Activated T-helper 2 cell treated with anti-CD3 and anti-CD28 coated beads, Interferon-gamma antibody, Interleukin-2, Interleukin-4, amounts not matched to agents 10 μg/mL and 5 μg/mL and 100 μg/mL, durations not matched to agents 14 hours and 24 hours and 36 hours (primary cell): ENCODE measurements at regions of chrX and their contacts with region 1.

Region 1: DNA sequence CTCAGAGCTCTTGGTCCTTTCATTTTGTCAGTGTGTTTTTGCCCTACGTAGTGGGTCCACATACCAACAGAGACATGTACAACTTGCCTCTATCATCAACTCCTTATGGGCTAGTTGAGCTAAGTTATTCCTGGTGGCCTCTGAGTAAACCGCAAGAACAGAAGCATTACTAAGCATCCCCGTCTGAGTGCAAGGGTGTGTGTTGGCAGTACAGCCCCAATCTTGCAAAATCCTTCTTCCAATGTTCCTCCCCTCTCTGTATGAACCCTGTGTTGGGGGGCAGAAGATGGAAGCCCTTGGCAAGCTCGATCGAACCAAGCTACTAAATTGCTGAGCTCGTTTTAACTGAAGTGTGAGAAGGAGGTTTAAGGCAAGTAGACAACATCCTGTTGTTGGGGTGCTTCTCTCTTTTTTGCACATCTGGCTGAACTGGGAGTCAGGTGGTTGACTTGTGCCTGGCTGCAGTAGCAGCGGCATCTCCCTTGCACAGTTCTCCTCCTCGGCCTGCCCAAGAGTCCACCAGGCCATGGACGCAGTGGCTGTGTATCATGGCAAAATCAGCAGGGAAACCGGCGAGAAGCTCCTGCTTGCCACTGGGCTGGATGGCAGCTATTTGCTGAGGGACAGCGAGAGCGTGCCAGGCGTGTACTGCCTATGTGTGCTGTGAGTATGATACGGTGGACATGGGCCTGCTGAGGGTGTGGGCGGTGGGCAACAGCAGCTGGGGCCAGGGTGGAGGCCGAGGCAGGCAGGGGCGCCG is at the start of gene SH2D1A:
- DNase-seq: peak; percentile 24
- H3K4me3 Mint-ChIP-seq: peak within 1 kb of the TSS; percentile 94
- H3K27ac Mint-ChIP-seq: peak within 1 kb of the TSS; percentile 99
- H3K4me1 Mint-ChIP-seq: peaks cover 45% of the 10 kb centered on the region
- H3K27me3 Mint-ChIP-seq: no peaks in the 10 kb centered on the region
- total RNA-seq, gene SH2D1A: 54.9 and 57.7 TPM in 2 replicates

Region 2: GRCh38 chrX:123859846-123860838 is 486.2 kb before region 1 on chrX and contains the start of gene XIAP:
- intact Hi-C with region 1: loop called (anchors 10 kb)
- DNase-seq: peak; percentile 63
- H3K4me3 Mint-ChIP-seq: peak within 1 kb of the TSS; percentile 84
- H3K27ac Mint-ChIP-seq: peak within 1 kb of the TSS; percentile 84
- H3K4me1 Mint-ChIP-seq: peaks cover 9% of the 10 kb centered on the region
- H3K27me3 Mint-ChIP-seq: no peaks in the 10 kb centered on the region
- total RNA-seq, gene XIAP: 32.7 and 33.4 TPM in 2 replicates

Region 3: DNA sequence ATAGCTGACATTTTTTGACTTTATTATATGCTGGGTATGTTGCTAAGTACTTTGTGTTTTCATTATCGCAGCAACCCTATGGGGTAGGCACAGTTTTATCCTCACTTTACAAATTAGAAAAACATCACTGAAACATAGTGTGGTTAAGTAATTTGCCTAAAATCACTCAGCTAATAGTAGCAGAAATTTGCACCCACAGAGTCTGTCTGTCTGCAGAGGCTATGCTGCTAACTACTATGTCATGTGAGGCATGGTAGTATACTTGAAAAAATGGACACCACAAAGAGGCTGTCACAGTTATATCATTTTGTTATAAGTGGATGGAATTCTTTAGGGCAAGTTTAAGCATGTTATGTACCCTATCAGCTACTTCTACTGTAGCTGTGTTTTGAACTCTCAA is 315.8 kb before region 1 on chrX:
- intact Hi-C with region 1: no loop called
- DNase-seq: no peak
- H3K4me3 Mint-ChIP-seq: no peak overlapping the region
- H3K27ac Mint-ChIP-seq: no peak overlapping the region
- H3K4me1 Mint-ChIP-seq: peaks cover 5% of the 10 kb centered on the region
- H3K27me3 Mint-ChIP-seq: no peaks in the 10 kb centered on the region

Region 4: DNA sequence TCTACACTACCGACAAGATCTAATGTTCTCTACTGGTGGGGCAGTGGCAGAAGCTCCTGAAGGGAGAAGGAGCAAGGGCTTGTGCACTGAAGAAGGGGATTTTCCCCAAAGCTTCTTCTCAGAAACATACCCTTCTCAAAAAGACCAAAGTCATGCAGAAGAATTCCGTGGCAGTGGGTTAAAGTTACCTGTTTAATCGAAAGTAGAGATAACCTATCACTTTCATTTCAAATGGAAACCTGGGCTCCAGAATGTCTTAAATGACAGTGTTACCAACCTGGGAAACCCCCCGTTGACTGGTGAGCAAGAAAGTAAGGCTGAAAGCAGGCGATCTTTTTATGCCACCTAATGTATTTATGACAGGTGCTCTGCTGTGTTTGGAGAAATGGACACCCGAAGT is 106.4 kb before region 1 on chrX:
- intact Hi-C with region 1: loop called (anchors 1 kb)
- DNase-seq: peak; percentile 38
- H3K4me3 Mint-ChIP-seq: peak overlapping the region; percentile 58
- H3K27ac Mint-ChIP-seq: peak overlapping the region; percentile 73
- H3K4me1 Mint-ChIP-seq: peaks cover 32% of the 10 kb centered on the region
- H3K27me3 Mint-ChIP-seq: no peaks in the 10 kb centered on the region

Region 5: GRCh38 chrX:124280294-124280902 is 65.9 kb before region 1 on chrX:
- intact Hi-C with region 1: loop called (anchors 5 kb)
- DNase-seq: no peak
- H3K4me3 Mint-ChIP-seq: no peak overlapping the region
- H3K27ac Mint-ChIP-seq: peak overlapping the region; percentile 87
- H3K4me1 Mint-ChIP-seq: peaks cover 19% of the 10 kb centered on the region
- H3K27me3 Mint-ChIP-seq: no peaks in the 10 kb centered on the region

Region 6: DNA sequence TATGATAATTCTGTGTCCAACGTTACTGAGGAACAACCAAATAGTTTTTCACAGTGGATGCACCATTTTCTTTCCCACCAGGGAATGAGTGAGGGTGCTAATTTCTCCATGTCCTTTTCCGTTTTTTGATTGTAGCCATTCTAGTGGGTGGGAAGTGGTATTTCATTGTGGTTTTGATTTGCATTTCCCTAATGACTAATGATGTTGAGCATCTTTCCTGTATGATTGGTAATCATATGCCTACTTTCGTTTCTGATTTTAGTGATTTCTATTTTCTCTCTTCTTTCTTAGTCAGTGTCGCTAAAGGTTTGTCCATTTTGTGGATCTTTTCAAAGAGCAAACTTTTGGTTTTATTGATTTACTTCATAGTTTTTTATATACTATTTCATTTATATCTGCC is 45.9 kb before region 1 on chrX:
- intact Hi-C with region 1: loop called (anchors 1 kb)
- DNase-seq: no peak
- H3K4me3 Mint-ChIP-seq: no peak overlapping the region
- H3K27ac Mint-ChIP-seq: peak overlapping the region; percentile 63
- H3K4me1 Mint-ChIP-seq: peaks cover 20% of the 10 kb centered on the region
- H3K27me3 Mint-ChIP-seq: no peaks in the 10 kb centered on the region

Region 7: DNA sequence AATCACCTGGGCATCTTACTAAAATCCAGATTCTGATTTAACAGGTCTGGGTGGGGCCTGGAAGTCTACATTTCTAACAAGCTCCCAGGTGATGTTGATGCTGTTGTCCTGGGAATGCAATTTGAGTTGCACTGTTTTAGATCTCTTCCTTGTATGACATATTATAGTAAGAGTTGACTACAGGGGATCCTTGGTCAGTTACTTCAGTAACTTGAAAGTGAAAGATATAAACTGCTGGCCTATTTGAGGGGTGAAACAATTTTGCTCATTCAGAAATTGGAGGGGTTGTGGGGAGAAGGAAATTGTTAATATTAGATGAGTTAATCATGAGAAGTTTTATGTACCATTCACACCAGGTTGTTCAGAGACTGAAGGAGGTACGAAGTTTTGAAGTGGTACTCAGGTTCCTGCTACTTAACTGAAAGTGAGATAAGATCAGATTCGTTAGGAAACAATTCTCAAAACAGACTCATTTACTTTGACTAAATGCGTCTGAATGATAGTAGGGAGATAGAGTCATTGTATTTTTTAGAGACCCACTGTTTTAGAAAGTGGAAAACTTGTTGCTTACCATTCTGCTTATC is 12.6 kb after region 1 on chrX:
- intact Hi-C with region 1: loop called (anchors 2 kb)
- DNase-seq: no peak
- H3K4me3 Mint-ChIP-seq: peak overlapping the region; percentile 61
- H3K27ac Mint-ChIP-seq: peak overlapping the region; percentile 84
- H3K4me1 Mint-ChIP-seq: peaks cover 51% of the 10 kb centered on the region
- H3K27me3 Mint-ChIP-seq: no peaks in the 10 kb centered on the region

Region 8: GRCh38 chrX:125295337-125295736 is 949.0 kb after region 1 on chrX:
- intact Hi-C with region 1: loop called (anchors 10 kb)
- DNase-seq: no peak
- H3K4me3 Mint-ChIP-seq: no peak overlapping the region
- H3K27ac Mint-ChIP-seq: peak overlapping the region; percentile 81
- H3K4me1 Mint-ChIP-seq: peaks cover 21% of the 10 kb centered on the region
- H3K27me3 Mint-ChIP-seq: no peaks in the 10 kb centered on the region